Activated CD4-positive, alpha-beta T cell treated with anti-CD3 and anti-CD28 coated beads, Interleukin-2, amount 10 ng/mL, durations not matched to agents 24 days and 14 days (primary cell): ENCODE measurements at regions of chr11 and their contacts with region 1.

Region 1: GRCh38 chr11:93784152-93784934 is at the start of gene MED17:
- DNase-seq: peak; percentile 97
- H3K4me3 Mint-ChIP-seq: peak within 1 kb of the TSS; percentile 99
- H3K27ac Mint-ChIP-seq: peak within 1 kb of the TSS; percentile 95
- H3K4me1 Mint-ChIP-seq: peaks cover 41% of the 10 kb centered on the region
- H3K27me3 Mint-ChIP-seq: no peaks in the 10 kb centered on the region
- total RNA-seq, gene MED17: 48.5 and 55.1 TPM in 2 replicates

Region 2: GRCh38 chr11:94134651-94135512 is 350.5 kb after region 1 on chr11:
- intact Hi-C with region 1: loop called (anchors 2 kb)
- DNase-seq: peak; percentile 67
- H3K4me3 Mint-ChIP-seq: peak overlapping the region; percentile 42
- H3K27ac Mint-ChIP-seq: peak overlapping the region; percentile 81
- H3K4me1 Mint-ChIP-seq: peaks cover 42% of the 10 kb centered on the region
- H3K27me3 Mint-ChIP-seq: no peaks in the 10 kb centered on the region

Region 3: GRCh38 chr11:94493281-94494125 is 709.2 kb after region 1 on chr11 and contains the starts of genes ANKRD49 and MRE11:
- intact Hi-C with region 1: loop called (anchors 2 kb)
- DNase-seq: peak; percentile 99
- H3K4me3 Mint-ChIP-seq: peak within 1 kb of the TSS; percentile 96
- H3K27ac Mint-ChIP-seq: peak within 1 kb of the TSS; percentile 95
- H3K4me1 Mint-ChIP-seq: peaks cover 30% of the 10 kb centered on the region
- H3K27me3 Mint-ChIP-seq: no peaks in the 10 kb centered on the region
- total RNA-seq, gene ANKRD49: 18.4 and 22.6 TPM in 2 replicates
- total RNA-seq, gene MRE11: 45.4 and 46.5 TPM in 2 replicates

Region 4: GRCh38 chr11:94973099-94973968 is 1189.0 kb after region 1 on chr11 and contains the starts of genes CWC15 and KDM4D:
- intact Hi-C with region 1: loop called (anchors 10 kb)
- DNase-seq: peak; percentile 98
- H3K4me3 Mint-ChIP-seq: peak within 1 kb of the TSS; percentile 94
- H3K27ac Mint-ChIP-seq: peak within 1 kb of the TSS; percentile 93
- H3K4me1 Mint-ChIP-seq: peaks cover 33% of the 10 kb centered on the region
- H3K27me3 Mint-ChIP-seq: no peaks in the 10 kb centered on the region
- total RNA-seq, gene CWC15: 87.6 and 96.2 TPM in 2 replicates
- total RNA-seq, gene KDM4D: 1.2 TPM in 2 replicates